ENCODE measurements at regions of chr14 and their contacts with region 1.

Region 1: GRCh38 chr14:97442363-97442762 is 645.2 kb downstream of the VRK1 start:
- DNase-seq: peak; percentile 26
- H3K4me3 Mint-ChIP-seq: peak overlapping the region; percentile 61
- H3K27ac Mint-ChIP-seq: peak overlapping the region; percentile 90
- H3K4me1 Mint-ChIP-seq: peaks cover 36% of the 10 kb centered on the region
- H3K27me3 Mint-ChIP-seq: no peaks in the 10 kb centered on the region

Region 2: DNA sequence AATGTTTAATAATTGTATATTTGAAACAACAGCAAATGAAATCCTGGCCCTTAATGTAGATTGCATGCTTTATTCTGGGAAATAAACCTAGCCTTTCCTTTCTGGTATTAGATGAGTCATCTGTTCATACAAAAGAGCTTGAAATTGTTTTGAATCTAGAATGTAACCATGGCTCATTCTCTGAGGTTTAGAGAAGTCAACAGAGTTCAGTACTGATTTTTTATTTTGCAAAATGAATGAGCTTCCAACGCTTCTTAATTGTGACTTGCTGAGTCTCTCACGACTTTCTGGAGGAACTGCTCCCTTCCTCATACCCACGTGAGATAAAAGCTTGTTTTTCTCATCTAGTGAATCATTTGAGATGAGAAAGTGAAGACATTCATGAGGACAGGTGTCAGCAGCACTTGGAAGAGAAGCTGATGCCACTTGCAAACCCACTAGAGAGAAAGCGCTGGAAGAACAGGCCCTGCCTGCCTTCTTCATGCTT is 135.6 kb before region 1 on chr14:
- intact Hi-C with region 1: loop called (anchors 1 kb)
- DNase-seq: no peak
- H3K4me3 Mint-ChIP-seq: peak overlapping the region; percentile 9
- H3K27ac Mint-ChIP-seq: peak overlapping the region; percentile 81
- H3K4me1 Mint-ChIP-seq: peaks cover 28% of the 10 kb centered on the region
- H3K27me3 Mint-ChIP-seq: no peaks in the 10 kb centered on the region

Measured in activated T-helper 1 cell treated with anti-CD3 and anti-CD28 coated beads, Interleukin-12 subunit alpha, Interleukin-12 subunit beta, Interleukin-2, Interleukin-4 antibody, amounts not matched to agents 30 ng/mL and 10 ng/mL and 1 ng/mL, durations not matched to agents 14 hours and 24 hours and 36 hours (primary cell).